Activated T-helper 1 cell treated with anti-CD3 and anti-CD28 coated beads, Interleukin-12 subunit alpha, Interleukin-12 subunit beta, Interleukin-2, Interleukin-4 antibody, amounts not matched to agents 30 ng/mL and 10 ng/mL and 1 ng/mL, durations not matched to agents 14 hours and 24 hours and 36 hours (primary cell): ENCODE measurements at regions of chr19 and their contacts with region 1.

Region 1: GRCh38 chr19:58475714-58476497 is at the start of gene ZNF446:
- DNase-seq: peak; percentile 95
- H3K4me3 Mint-ChIP-seq: peak within 1 kb of the TSS; percentile 88
- H3K27ac Mint-ChIP-seq: peak within 1 kb of the TSS; percentile 99
- H3K4me1 Mint-ChIP-seq: peaks cover 25% of the 10 kb centered on the region
- H3K27me3 Mint-ChIP-seq: no peaks in the 10 kb centered on the region
- total RNA-seq, gene ZNF446: 6.6 and 6.7 TPM in 2 replicates

Region 2: GRCh38 chr19:58317476-58318072 is 158.3 kb before region 1 on chr19:
- intact Hi-C with region 1: no loop called
- DNase-seq: no peak
- H3K4me3 Mint-ChIP-seq: no peak overlapping the region
- H3K27ac Mint-ChIP-seq: no peak overlapping the region
- H3K4me1 Mint-ChIP-seq: no peaks in the 10 kb centered on the region
- H3K27me3 Mint-ChIP-seq: no peaks in the 10 kb centered on the region

Region 3: GRCh38 chr19:58386576-58387337 is 89.1 kb before region 1 on chr19 and contains the start of gene RPS5:
- intact Hi-C with region 1: loop called (anchors 1 kb)
- DNase-seq: peak; percentile 95
- H3K4me3 Mint-ChIP-seq: peak within 1 kb of the TSS; percentile 93
- H3K27ac Mint-ChIP-seq: peak within 1 kb of the TSS; percentile 99
- H3K4me1 Mint-ChIP-seq: peaks cover 35% of the 10 kb centered on the region
- H3K27me3 Mint-ChIP-seq: no peaks in the 10 kb centered on the region
- total RNA-seq, gene RPS5: 1,157 and 1,161 TPM in 2 replicates

Region 4: DNA sequence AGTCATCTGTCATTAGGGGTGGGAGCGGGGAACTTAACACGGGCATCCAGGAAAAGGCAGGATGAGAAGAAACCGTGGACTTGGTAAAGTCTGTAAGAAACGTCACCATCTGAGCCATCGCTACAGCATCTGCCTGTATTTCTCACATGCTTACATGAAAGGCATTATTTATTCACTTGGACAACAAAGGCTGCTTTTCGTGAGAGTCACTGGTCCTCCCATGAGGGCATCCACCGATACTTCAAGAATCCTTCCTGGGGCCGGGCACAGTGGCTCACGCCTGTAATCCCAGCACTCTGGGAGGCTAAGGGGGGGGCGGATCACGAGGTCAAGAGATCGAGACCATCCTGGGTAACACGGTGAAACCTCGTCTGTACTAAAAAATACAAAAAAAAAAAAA is 16.4 kb after region 1 on chr19:
- intact Hi-C with region 1: loop called (anchors 1 kb)
- DNase-seq: no peak
- H3K4me3 Mint-ChIP-seq: no peak overlapping the region
- H3K27ac Mint-ChIP-seq: no peak overlapping the region
- H3K4me1 Mint-ChIP-seq: peaks cover 16% of the 10 kb centered on the region
- H3K27me3 Mint-ChIP-seq: no peaks in the 10 kb centered on the region

Region 5: GRCh38 chr19:58513694-58514563 is 38.0 kb after region 1 on chr19:
- intact Hi-C with region 1: loop called (anchors 1 kb)
- DNase-seq: peak; percentile 96
- H3K4me3 Mint-ChIP-seq: peak overlapping the region; percentile 91
- H3K27ac Mint-ChIP-seq: peak overlapping the region; percentile 96
- H3K4me1 Mint-ChIP-seq: peaks cover 20% of the 10 kb centered on the region
- H3K27me3 Mint-ChIP-seq: peaks cover 3% of the 10 kb centered on the region

Region 6: GRCh38 chr19:58572818-58573657 is 97.1 kb after region 1 on chr19 and contains the start of gene MZF1:
- intact Hi-C with region 1: loop called (anchors 1 kb)
- DNase-seq: peak; percentile 100
- H3K4me3 Mint-ChIP-seq: peak within 1 kb of the TSS; percentile 95
- H3K27ac Mint-ChIP-seq: peak within 1 kb of the TSS; percentile 99
- H3K4me1 Mint-ChIP-seq: peaks cover 41% of the 10 kb centered on the region
- H3K27me3 Mint-ChIP-seq: no peaks in the 10 kb centered on the region
- total RNA-seq, gene MZF1: 19.6 and 21.6 TPM in 2 replicates